Kidney (tissue), 22 donors: ENCODE measurements at regions of chr6 and their contacts with region 1.

Region 1: DNA sequence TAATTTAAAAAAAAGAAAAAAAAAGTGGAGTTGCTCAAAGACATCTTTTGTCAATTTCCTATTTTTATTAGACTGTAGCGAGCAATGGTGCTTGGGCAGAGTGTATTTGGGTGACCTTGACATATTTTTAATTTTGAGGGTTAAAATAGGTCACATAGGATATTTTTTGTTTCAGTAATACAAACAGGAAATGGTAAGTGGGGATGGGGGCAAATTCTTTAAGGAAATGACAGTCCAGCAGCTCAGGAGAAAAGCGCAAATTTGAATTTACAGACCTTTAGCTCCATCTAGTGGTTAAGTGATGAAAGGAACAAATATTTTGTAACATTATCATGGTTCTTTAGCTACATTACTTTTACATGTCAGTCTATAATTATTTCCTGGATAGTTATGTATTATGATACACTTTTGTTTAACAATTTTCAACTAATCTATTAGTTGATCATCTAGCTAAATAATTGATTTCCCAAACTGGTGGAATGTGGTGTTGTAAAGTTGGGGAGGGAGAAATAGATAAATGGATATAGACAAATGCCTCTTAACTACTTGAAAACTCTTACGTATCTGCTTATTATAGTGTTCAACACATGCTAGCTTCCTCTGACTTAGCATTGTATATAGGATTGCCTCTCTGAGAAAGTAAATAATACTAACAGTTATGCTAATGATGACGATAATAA is 10.0 kb downstream of the CITED2 start:
- DNase-seq: peak in 2 of 5 donors; percentile 73 to 76
- H3K4me3 ChIP-seq: no peak overlapping the region
- H3K27ac ChIP-seq: no peak overlapping the region
- H3K4me1 ChIP-seq: peaks cover 0 to 9% (median 7%) of the 10 kb centered on the region in 3 donors
- H3K27me3 ChIP-seq: no peaks in the 10 kb centered on the region
- CTCF ChIP-seq: peak; percentile 72

Region 2: DNA sequence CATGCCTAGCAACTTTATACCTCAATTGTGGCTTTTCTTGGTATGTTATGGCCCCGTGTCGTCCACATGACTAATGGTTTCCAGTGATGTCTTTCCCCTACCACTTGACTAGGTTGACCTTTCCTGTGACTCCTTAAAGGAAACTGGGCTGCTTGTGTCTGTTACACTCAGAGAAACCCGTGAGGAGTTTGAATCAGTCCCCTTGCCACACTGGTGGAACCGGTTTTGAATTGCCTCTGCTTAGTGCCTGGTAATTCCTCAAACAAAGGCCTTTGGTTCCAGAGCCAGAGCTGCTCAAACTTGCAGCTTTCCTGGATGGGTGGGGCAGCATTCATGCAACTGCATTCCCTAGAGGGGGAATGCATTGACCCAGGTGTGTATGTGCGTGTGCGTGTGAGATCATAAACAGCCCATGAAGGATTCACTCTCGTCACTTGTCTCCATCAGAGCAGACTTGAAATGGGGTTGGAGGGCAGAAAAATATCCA is 546.6 kb before region 1 on chr6:
- intact Hi-C with region 1: loop called (anchors 10 kb)
- DNase-seq: peak; percentile 82 to 93 (median 86)
- H3K4me3 ChIP-seq: no peak overlapping the region
- H3K27ac ChIP-seq: peak overlapping the region; percentile 49 to 68
- H3K4me1 ChIP-seq: peaks cover 0 to 5% (median 0%) of the 10 kb centered on the region in 3 donors
- H3K27me3 ChIP-seq: no peaks in the 10 kb centered on the region
- CTCF ChIP-seq: no peak

Region 3: DNA sequence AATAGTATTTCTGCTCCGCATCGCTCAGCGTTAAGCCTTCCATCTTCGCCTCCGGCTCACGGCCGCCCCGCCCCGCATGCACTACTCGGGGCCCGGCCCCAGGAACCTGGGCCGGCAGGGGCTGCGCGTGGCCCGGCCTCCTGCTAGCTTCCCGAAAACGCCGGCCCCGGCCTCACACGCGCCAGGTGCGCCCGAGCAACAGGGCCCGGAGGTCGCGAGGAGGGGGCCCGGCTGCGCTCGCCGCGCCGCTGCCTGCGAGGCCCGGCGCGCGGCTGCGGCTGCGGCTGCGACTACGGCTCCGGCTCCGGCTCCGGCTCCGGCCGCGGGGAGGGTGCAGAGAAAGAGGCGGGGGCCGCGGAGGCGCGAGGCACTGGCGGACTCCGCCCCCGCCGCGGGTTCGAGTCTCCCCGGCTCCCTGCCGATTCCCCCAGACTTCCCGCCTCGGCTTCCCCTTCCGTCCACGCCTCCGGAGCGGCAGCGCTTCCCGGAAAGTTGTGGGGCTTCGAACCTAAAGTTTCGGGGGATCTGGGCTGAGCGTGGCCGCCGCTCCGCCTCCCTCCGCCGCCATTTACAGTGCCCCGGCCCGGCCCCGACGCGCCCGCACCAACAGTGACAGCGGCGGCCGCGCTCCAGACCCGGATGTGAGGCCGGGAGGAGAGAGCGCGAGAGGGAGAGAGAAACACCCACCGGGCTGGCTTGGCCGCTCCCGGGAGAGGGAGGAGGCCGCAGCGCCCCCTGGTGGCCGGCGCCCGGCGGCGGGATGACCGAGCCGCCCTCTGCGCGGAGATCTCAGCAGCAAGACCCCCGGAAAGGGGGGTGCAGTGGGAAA is 376.6 kb before region 1 on chr6 and contains the start of gene REPS1:
- intact Hi-C with region 1: no loop called
- DNase-seq: peak; percentile 95 to 97 (median 96)
- H3K4me3 ChIP-seq: peak within 1 kb of the TSS; percentile 63 to 76 (median 70)
- H3K27ac ChIP-seq: peak within 1 kb of the TSS; percentile 83 to 85
- H3K4me1 ChIP-seq: peaks cover 0 to 5% (median 0%) of the 10 kb centered on the region in 3 donors
- H3K27me3 ChIP-seq: no peaks in the 10 kb centered on the region
- CTCF ChIP-seq: peak; percentile 74
- total RNA-seq, gene REPS1: 37.0 TPM

Region 4: GRCh38 chr6:139219746-139220145 is 144.7 kb before region 1 on chr6:
- intact Hi-C with region 1: loop called (anchors 10 kb)
- DNase-seq: no peak
- H3K4me3 ChIP-seq: no peak overlapping the region
- H3K27ac ChIP-seq: no peak overlapping the region
- H3K4me1 ChIP-seq: peaks cover 0 to 4% (median 2%) of the 10 kb centered on the region in 3 donors
- H3K27me3 ChIP-seq: no peaks in the 10 kb centered on the region
- CTCF ChIP-seq: no peak

Region 5: DNA sequence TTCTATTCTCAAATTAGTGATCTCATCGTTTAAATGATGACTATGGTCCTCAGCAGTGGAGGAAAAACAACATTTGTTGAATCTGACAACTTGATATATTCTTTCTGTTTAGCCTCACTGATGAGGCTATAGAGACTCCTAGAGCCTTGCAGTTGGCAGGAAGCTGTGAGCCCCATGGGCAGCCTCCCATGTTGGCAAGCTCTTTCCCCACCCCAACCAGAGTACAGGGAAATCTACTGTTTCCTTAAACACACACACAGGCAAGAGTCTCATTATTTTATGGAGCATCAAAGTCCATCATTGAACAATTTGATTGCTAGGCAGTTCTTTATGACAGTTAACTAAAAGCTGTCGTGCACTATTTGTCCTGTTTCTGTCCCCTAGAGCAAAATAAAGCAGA is 508.2 kb after region 1 on chr6:
- intact Hi-C with region 1: no loop called
- DNase-seq: no peak
- H3K4me3 ChIP-seq: no peak overlapping the region
- H3K27ac ChIP-seq: no peak overlapping the region
- H3K4me1 ChIP-seq: peaks cover 2 to 7% (median 3%) of the 10 kb centered on the region in 3 donors
- H3K27me3 ChIP-seq: no peaks in the 10 kb centered on the region
- CTCF ChIP-seq: no peak